ENCODE measurements at regions of chr4 and their contacts with region 1.

Region 1: GRCh38 chr4:122732329-122733026 is at the start of gene BBS12:
- DNase-seq: peak; percentile 90 to 99 (median 99)
- ATAC-seq: peak; percentile 99
- H3K4me3 ChIP-seq: peak within 1 kb of the TSS; percentile 97
- H3K4me3 Mint-ChIP-seq: peak within 1 kb of the TSS; percentile 80 to 100 (median 97)
- H3K27ac ChIP-seq: peak within 1 kb of the TSS; percentile 74
- H3K27ac Mint-ChIP-seq: peak within 1 kb of the TSS; percentile 92 to 99 (median 98)
- H3K4me1 ChIP-seq: peaks cover 9 to 17% of the 10 kb centered on the region in 2 donors
- H3K4me1 Mint-ChIP-seq: peaks cover 6 to 44% (median 36%) of the 10 kb centered on the region in 7 donors
- H3K27me3 ChIP-seq: no peaks in the 10 kb centered on the region
- H3K27me3 Mint-ChIP-seq: no peaks in the 10 kb centered on the region
- total RNA-seq, gene BBS12: 0.71 to 4.3 (median 2.3) TPM

Region 2: GRCh38 chr4:121696581-121697461 is 1035.7 kb before region 1 on chr4 and contains the start of gene ANXA5:
- CTCF ChIA-PET with region 1: no interaction called
- POLR2A ChIA-PET with region 1: no interaction called
- intact Hi-C with region 1: loop called in 1 of 2 experiments (anchors 1 kb)
- DNase-seq: peak; percentile 8 to 85 (median 41)
- ATAC-seq: peak; percentile 92
- H3K4me3 ChIP-seq: peak within 1 kb of the TSS; percentile 87
- H3K4me3 Mint-ChIP-seq: peak within 1 kb of the TSS; percentile 94 to 99 (median 97)
- H3K27ac ChIP-seq: peak within 1 kb of the TSS; percentile 39
- H3K27ac Mint-ChIP-seq: peak within 1 kb of the TSS; percentile 67 to 99 (median 87)
- H3K4me1 ChIP-seq: peaks cover 4 to 13% of the 10 kb centered on the region in 2 donors
- H3K4me1 Mint-ChIP-seq: peaks cover 12 to 43% (median 19%) of the 10 kb centered on the region in 7 donors
- H3K27me3 ChIP-seq: no peaks in the 10 kb centered on the region
- H3K27me3 Mint-ChIP-seq: peaks cover 0 to 43% (median 28%) of the 10 kb centered on the region in 5 donors
- total RNA-seq, gene ANXA5: 25.5 to 180 (median 49.5) TPM

Region 3: GRCh38 chr4:121869841-121870656 is 862.4 kb before region 1 on chr4 and contains the start of gene BBS7:
- CTCF ChIA-PET with region 1: no interaction called
- POLR2A ChIA-PET with region 1: no interaction called
- intact Hi-C with region 1: loop called (anchors 1 to 2 kb)
- DNase-seq: peak; percentile 79 to 93 (median 89)
- ATAC-seq: peak; percentile 98
- H3K4me3 ChIP-seq: peak within 1 kb of the TSS; percentile 99
- H3K4me3 Mint-ChIP-seq: peak within 1 kb of the TSS; percentile 88 to 98 (median 97)
- H3K27ac ChIP-seq: peak within 1 kb of the TSS; percentile 77
- H3K27ac Mint-ChIP-seq: peak within 1 kb of the TSS; percentile 69 to 95 (median 90)
- H3K4me1 ChIP-seq: peaks cover 0 to 10% of the 10 kb centered on the region in 2 donors
- H3K4me1 Mint-ChIP-seq: peaks cover 9 to 17% (median 15%) of the 10 kb centered on the region in 7 donors
- H3K27me3 ChIP-seq: no peaks in the 10 kb centered on the region
- H3K27me3 Mint-ChIP-seq: peaks cover 0 to 30% (median 12%) of the 10 kb centered on the region in 5 donors
- total RNA-seq, gene BBS7: 3.7 to 13.1 (median 8.1) TPM

Region 4: GRCh38 chr4:122602277-122603142 is 130.0 kb before region 1 on chr4:
- CTCF ChIA-PET with region 1: no interaction called
- POLR2A ChIA-PET with region 1: no interaction called
- intact Hi-C with region 1: loop called (anchors 1 to 5 kb)
- DNase-seq: peak in 5 of 9 donors; percentile 13 to 33 (median 24)
- ATAC-seq: peak; percentile 42
- H3K4me3 ChIP-seq: no peak overlapping the region
- H3K4me3 Mint-ChIP-seq: peak overlapping the region in 6 of 10 donors; percentile 3 to 39 (median 26)
- H3K27ac ChIP-seq: no peak overlapping the region
- H3K27ac Mint-ChIP-seq: peak overlapping the region in 2 of 9 donors; percentile 10 to 29
- H3K4me1 ChIP-seq: no peaks in the 10 kb centered on the region
- H3K4me1 Mint-ChIP-seq: peaks cover 0 to 26% (median 5%) of the 10 kb centered on the region in 7 donors
- H3K27me3 ChIP-seq: no peaks in the 10 kb centered on the region
- H3K27me3 Mint-ChIP-seq: peaks cover 0 to 19% (median 0%) of the 10 kb centered on the region in 5 donors

Region 5: DNA sequence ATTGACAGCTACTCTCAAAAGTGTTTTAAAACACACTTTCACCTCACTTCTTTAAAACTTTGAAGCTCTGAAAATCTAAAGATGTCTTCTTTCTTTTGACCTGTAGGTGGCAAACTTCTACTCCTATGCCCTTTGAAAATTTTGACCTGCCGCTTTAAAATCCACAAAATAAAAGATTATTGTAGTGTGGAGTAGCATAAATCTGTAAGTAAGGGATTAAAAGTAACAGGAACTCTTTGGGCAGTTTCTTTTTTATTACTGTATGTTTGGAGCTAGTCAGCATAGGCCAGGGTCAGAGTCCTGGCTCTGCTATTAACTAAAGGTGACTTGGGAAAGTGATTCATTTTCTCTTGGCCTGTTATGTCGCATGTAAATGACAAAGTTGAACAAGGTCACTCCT is 25.6 kb after region 1 on chr4:
- CTCF ChIA-PET with region 1: no interaction called
- POLR2A ChIA-PET with region 1: no interaction called
- intact Hi-C with region 1: loop called (anchors 2 kb)
- DNase-seq: peak in 5 of 9 donors; percentile 16 to 31 (median 21)
- ATAC-seq: peak; percentile 57
- H3K4me3 ChIP-seq: no peak overlapping the region
- H3K4me3 Mint-ChIP-seq: no peak overlapping the region
- H3K27ac ChIP-seq: no peak overlapping the region
- H3K27ac Mint-ChIP-seq: no peak overlapping the region
- H3K4me1 ChIP-seq: peaks cover 0 to 9% of the 10 kb centered on the region in 2 donors
- H3K4me1 Mint-ChIP-seq: peaks cover 0 to 24% (median 12%) of the 10 kb centered on the region in 7 donors
- H3K27me3 ChIP-seq: peaks cover 0 to 3% of the 10 kb centered on the region in 2 donors
- H3K27me3 Mint-ChIP-seq: peaks cover 0 to 24% (median 18%) of the 10 kb centered on the region in 5 donors

Region 6: DNA sequence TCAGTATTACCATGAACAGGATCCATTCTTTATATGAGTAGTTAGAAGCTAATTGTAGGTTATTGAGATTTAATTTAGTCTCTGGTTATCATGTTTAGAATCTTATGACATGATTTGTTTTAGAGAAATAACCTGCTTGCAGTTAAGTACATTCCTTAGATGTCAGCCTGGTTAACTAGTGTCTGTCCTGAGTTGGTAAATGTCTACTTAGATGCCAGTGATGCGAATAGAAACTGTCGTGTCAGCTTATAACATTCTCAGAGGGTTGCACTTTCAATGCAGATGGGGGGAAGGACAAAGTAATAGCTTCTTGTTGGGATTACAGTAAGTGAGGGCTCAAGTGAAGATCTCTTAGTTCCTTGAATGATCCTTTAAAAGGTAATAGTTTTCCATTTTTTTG is 436.3 kb after region 1 on chr4:
- CTCF ChIA-PET with region 1: no interaction called
- POLR2A ChIA-PET with region 1: no interaction called
- intact Hi-C with region 1: no loop called
- DNase-seq: no peak
- ATAC-seq: no peak
- H3K4me3 ChIP-seq: no peak overlapping the region
- H3K4me3 Mint-ChIP-seq: no peak overlapping the region
- H3K27ac ChIP-seq: no peak overlapping the region
- H3K27ac Mint-ChIP-seq: no peak overlapping the region
- H3K4me1 ChIP-seq: no peaks in the 10 kb centered on the region
- H3K4me1 Mint-ChIP-seq: peaks cover 0 to 2% (median 0%) of the 10 kb centered on the region in 7 donors
- H3K27me3 ChIP-seq: no peaks in the 10 kb centered on the region
- H3K27me3 Mint-ChIP-seq: no peaks in the 10 kb centered on the region